ENCODE measurements at regions of chr12 and their contacts with region 1.

Region 1: GRCh38 chr12:55659486-55660385 is 23.0 kb downstream of the OR10P1 start:
- DNase-seq: peak; percentile 61
- H3K4me3 ChIP-seq: no peak overlapping the region
- H3K27ac ChIP-seq: no peak overlapping the region
- H3K4me1 ChIP-seq: no peaks in the 10 kb centered on the region
- CTCF ChIP-seq: peak; percentile 84

Region 2: GRCh38 chr12:54082397-54082892 is 1577.3 kb before region 1 on chr12:
- CTCF ChIA-PET with region 1: no interaction called
- POLR2A ChIA-PET with region 1: no interaction called
- intact Hi-C with region 1: no loop called
- DNase-seq: peak; percentile 39
- H3K4me3 ChIP-seq: peak overlapping the region; percentile 57
- H3K27ac ChIP-seq: peak overlapping the region; percentile 37
- H3K4me1 ChIP-seq: peaks cover 8% of the 10 kb centered on the region
- CTCF ChIP-seq: no peak

Region 3: DNA sequence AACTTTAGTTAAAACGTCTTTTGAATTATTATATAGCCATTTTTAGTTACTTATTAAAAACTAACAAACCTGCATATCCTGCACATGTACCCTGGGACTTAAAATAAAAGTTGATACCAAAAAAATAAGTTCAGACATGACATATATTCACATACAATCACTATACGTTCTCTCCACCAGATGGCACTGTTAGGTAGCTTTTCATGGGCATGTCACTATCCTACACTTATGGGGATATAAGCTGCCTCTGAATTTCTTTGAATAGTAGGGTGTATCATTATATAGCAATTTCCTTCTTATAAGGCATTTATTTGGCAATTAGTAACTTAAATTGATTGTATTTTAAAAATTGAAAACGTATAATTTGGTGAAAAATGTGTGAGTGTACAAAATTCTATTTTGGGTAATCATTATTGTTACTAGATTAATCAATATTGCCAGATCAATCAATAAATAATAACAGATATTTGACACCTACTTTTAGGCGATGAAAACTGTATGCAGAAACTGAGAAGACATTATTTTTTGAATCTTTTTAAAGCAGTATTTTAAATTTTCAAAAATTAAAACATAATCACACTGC is 470.7 kb before region 1 on chr12:
- CTCF ChIA-PET with region 1: no interaction called
- POLR2A ChIA-PET with region 1: no interaction called
- intact Hi-C with region 1: loop called (anchors 1 kb)
- DNase-seq: peak; percentile 78
- H3K4me3 ChIP-seq: no peak overlapping the region
- H3K27ac ChIP-seq: no peak overlapping the region
- H3K4me1 ChIP-seq: no peaks in the 10 kb centered on the region
- CTCF ChIP-seq: peak; percentile 92

Region 4: GRCh38 chr12:55681142-55682077 is 21.7 kb after region 1 on chr12:
- CTCF ChIA-PET with region 1: no interaction called
- POLR2A ChIA-PET with region 1: interaction called, 5 read pairs
- intact Hi-C with region 1: loop called (anchors 1 kb)
- DNase-seq: no peak
- H3K4me3 ChIP-seq: no peak overlapping the region
- H3K27ac ChIP-seq: no peak overlapping the region
- H3K4me1 ChIP-seq: peaks cover 7% of the 10 kb centered on the region
- CTCF ChIP-seq: peak; percentile 66

Region 5: GRCh38 chr12:55705782-55706402 is 46.2 kb after region 1 on chr12:
- CTCF ChIA-PET with region 1: no interaction called
- POLR2A ChIA-PET with region 1: no interaction called
- intact Hi-C with region 1: loop called (anchors 1 kb)
- DNase-seq: peak; percentile 63
- H3K4me3 ChIP-seq: no peak overlapping the region
- H3K27ac ChIP-seq: no peak overlapping the region
- H3K4me1 ChIP-seq: peaks cover 19% of the 10 kb centered on the region
- CTCF ChIP-seq: peak; percentile 85

Region 6: GRCh38 chr12:55715833-55716581 is 56.3 kb after region 1 on chr12 and contains the start of gene BLOC1S1:
- CTCF ChIA-PET with region 1: interaction called, 3 read pairs
- POLR2A ChIA-PET with region 1: no interaction called
- intact Hi-C with region 1: loop called (anchors 1 kb)
- DNase-seq: peak; percentile 97
- H3K4me3 ChIP-seq: peak within 1 kb of the TSS; percentile 77
- H3K27ac ChIP-seq: peak within 1 kb of the TSS; percentile 81
- H3K4me1 ChIP-seq: peaks cover 28% of the 10 kb centered on the region
- CTCF ChIP-seq: no peak
- total RNA-seq, gene BLOC1S1: 139 and 161 TPM in 2 replicates

Measured in OCI-LY7 (cell line).